ENCODE measurements at regions of chr19 and their contacts with region 1.

Region 1: DNA sequence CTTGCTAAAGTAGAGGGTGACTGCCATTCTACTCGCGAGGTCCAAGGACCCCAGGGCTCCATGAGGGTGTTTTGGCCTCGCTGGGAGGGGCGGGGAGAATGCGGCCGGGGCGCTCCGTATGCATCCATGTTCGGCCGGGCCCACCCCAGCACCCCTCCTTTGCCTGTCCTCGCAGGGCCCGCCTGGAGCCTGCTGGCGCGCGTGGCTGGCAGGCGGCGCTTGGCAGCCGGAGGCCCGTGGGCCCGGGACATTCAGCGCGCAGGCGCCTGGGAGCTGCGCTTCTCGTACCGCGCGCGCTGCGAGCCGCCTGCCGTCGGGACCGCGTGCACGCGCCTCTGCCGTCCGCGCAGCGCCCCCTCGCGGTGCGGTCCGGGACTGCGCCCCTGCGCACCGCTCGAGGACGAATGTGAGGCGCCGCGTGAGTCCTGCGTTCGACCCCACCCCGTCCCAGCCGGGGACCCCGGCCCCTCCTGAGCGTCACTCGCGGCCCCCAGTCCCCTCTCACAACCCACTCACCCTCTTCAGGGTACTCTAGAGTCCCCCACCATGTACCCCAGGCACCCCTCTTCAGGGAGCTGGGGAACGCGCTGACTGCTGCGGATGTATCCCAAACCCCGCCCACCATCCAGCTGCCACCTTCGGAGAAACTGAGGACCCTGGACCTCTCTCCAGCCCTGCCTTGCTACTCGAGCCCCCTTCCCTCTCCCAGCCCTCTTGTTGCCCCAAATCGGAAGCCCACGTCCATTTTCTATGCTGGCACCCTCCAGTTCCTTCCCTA is 4.1 kb downstream of the DLL3 start:
- DNase-seq: peak; percentile 93
- ATAC-seq: peak; percentile 24
- H3K4me3 ChIP-seq: peak overlapping the region in 1 of 2 experiments; percentile 34; a peak in 2 of 4 replicates
- H3K27ac ChIP-seq: peak overlapping the region; percentile 3; the same call in 1 of the 2 replicates
- H3K4me1 ChIP-seq: peaks cover 27% of the 10 kb centered on the region
- H3K27me3 ChIP-seq: peaks cover 8% of the 10 kb centered on the region
- CTCF ChIP-seq: no peak

Region 2: GRCh38 chr19:39057615-39058014 is 445.2 kb before region 1 on chr19:
- CTCF ChIA-PET with region 1: interaction called, 20 read pairs
- POLR2A ChIA-PET with region 1: no interaction called
- in situ Hi-C with region 1: no loop called
- intact Hi-C with region 1: no loop called
- DNase-seq: no peak
- ATAC-seq: no peak
- H3K4me3 ChIP-seq: no peak overlapping the region
- H3K27ac ChIP-seq: 0 out of 2 replicates have a peak overlapping the region, but pooled peaks have one; percentile 0
- H3K4me1 ChIP-seq: no peaks in the 10 kb centered on the region
- H3K27me3 ChIP-seq: no peaks in the 10 kb centered on the region
- CTCF ChIP-seq: no peak

Region 3: DNA sequence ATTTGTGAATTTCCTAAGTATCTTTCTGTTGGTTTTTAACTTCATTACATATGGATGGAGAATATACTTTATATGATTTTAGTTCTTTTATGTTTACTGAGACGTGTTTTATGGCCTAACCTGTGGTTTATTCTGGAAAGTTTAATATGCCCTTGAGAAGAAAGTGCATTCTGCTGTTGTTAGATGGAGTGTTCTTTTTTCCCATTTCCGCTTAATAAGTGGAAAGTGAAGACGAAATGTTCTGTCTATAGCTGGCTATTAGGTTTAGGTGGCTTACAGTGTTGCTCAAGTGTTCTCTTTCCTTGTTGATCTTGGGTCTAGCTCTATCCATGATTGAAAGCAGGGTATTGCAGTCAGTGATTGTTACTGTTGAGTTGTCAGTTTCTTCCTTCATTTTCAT is 39.4 kb before region 1 on chr19:
- CTCF ChIA-PET with region 1: interaction called, 15 read pairs
- POLR2A ChIA-PET with region 1: interaction called, 11 read pairs
- in situ Hi-C with region 1: no loop called
- intact Hi-C with region 1: no loop called
- DNase-seq: no peak
- ATAC-seq: no peak
- H3K4me3 ChIP-seq: no peak overlapping the region
- H3K27ac ChIP-seq: no peak overlapping the region
- H3K4me1 ChIP-seq: no peaks in the 10 kb centered on the region
- H3K27me3 ChIP-seq: no peaks in the 10 kb centered on the region
- CTCF ChIP-seq: no peak

Region 4: DNA sequence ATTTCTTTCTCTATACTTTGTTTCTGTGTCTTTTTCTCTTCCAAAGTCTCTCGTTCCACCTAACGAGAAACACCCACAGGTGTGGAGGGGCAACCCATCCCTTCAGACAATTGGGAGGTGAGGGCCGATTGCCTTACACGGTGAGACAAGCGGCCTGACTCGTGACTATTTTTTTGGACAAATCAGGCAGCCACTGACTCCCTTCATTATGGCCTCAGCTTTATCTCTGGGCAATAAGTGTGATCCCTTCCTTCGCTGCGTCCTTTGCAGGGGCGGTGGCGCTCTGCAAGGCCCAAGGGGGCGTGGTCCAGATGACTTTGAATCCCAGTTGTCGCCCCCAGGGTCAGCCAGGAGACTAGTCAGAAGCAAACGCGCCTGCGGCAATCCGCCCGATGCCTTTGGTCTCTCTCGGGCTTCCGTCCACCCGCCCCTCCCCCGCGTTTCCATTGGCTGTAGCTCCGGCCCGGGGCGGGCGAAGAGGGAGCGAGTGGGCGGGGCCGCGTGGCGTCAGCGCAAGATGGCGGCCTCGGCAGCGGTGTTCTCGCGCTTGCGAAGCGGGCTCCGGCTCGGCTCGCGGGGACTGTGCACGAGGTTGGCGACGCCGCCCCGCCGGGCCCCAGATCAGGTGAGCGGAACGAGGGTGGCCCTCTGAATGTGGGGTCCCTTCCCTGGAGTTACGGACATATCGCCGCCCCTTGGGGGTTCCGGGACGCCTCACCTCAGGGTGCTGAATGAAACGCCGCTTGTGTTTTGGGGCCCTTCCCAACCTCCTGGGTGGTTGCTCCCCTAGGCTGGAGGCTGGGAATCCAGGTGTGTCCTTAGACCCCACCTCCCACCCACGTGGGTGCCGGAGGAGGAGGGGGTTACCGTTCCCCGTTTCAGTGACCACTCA is 22.2 kb before region 1 on chr19 and contains the start of gene TIMM50:
- CTCF ChIA-PET with region 1: interaction called, 89 read pairs
- POLR2A ChIA-PET with region 1: interaction called, 20 read pairs
- in situ Hi-C with region 1: no loop called
- intact Hi-C with region 1: loop called (anchors 2 kb)
- DNase-seq: peak; percentile 100
- ATAC-seq: peak; percentile 96
- H3K4me3 ChIP-seq: peak within 1 kb of the TSS; percentile 39 to 55
- H3K27ac ChIP-seq: peak within 1 kb of the TSS; percentile 86
- H3K4me1 ChIP-seq: peaks cover 23% of the 10 kb centered on the region
- H3K27me3 ChIP-seq: no peaks in the 10 kb centered on the region
- CTCF ChIP-seq: no peak
- total RNA-seq, gene TIMM50: 1,837 TPM

Region 5: DNA sequence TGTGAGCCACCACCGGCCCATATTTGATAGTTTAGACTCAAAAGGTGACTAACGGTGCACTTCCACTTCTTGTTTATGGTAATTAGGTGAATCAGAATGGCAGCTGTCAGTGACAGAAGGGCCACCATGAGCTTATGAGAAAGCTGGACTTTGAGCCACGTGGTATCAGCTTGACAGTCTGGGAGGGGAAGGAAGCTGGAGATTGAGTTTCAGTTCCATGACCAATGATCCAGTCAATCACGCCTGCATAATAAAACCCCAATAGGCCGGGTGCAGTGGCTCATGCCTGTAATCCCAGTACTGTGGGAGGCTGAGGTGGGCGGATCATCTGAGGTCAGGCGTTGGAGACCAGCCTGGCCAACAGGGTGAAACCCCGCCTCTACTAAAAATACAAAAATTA is 21.7 kb after region 1 on chr19:
- CTCF ChIA-PET with region 1: interaction called, 41 read pairs
- POLR2A ChIA-PET with region 1: interaction called, 16 read pairs
- in situ Hi-C with region 1: no loop called
- intact Hi-C with region 1: no loop called
- DNase-seq: no peak
- ATAC-seq: peak; percentile 1; the same call in 1 of the 2 replicates
- H3K4me3 ChIP-seq: no peak overlapping the region
- H3K27ac ChIP-seq: no peak overlapping the region
- H3K4me1 ChIP-seq: peaks cover 3% of the 10 kb centered on the region; the same call in 1 of the 2 replicates
- H3K27me3 ChIP-seq: no peaks in the 10 kb centered on the region
- CTCF ChIP-seq: no peak

Region 6: DNA sequence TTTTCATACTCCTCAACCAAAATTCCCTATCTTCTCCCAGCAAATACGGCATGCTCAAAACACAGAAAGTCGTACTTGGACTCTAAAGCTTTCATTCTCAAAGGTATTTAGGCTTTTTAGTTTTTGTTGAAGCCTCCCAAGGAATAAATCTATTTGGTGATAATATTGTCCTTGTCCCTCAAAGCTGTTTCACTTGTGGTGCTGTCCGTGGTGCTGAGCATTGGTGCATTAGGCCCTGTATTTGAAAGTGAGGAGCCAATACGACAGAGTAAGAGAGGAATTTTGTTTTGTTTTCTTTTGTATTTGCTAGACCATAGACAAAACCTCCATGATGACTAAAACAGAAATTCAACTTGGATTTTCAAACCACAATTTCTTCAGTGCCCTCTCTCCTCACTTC is 96.3 kb after region 1 on chr19:
- CTCF ChIA-PET with region 1: no interaction called
- POLR2A ChIA-PET with region 1: no interaction called
- in situ Hi-C with region 1: loop called (anchors 5 kb)
- intact Hi-C with region 1: no loop called
- DNase-seq: no peak
- ATAC-seq: no peak
- H3K4me3 ChIP-seq: no peak overlapping the region
- H3K27ac ChIP-seq: no peak overlapping the region
- H3K4me1 ChIP-seq: no peaks in the 10 kb centered on the region
- H3K27me3 ChIP-seq: peaks cover 88% of the 10 kb centered on the region
- CTCF ChIP-seq: 0 out of 2 replicates have a peak, but pooled peaks have one; percentile 1

Region 7: DNA sequence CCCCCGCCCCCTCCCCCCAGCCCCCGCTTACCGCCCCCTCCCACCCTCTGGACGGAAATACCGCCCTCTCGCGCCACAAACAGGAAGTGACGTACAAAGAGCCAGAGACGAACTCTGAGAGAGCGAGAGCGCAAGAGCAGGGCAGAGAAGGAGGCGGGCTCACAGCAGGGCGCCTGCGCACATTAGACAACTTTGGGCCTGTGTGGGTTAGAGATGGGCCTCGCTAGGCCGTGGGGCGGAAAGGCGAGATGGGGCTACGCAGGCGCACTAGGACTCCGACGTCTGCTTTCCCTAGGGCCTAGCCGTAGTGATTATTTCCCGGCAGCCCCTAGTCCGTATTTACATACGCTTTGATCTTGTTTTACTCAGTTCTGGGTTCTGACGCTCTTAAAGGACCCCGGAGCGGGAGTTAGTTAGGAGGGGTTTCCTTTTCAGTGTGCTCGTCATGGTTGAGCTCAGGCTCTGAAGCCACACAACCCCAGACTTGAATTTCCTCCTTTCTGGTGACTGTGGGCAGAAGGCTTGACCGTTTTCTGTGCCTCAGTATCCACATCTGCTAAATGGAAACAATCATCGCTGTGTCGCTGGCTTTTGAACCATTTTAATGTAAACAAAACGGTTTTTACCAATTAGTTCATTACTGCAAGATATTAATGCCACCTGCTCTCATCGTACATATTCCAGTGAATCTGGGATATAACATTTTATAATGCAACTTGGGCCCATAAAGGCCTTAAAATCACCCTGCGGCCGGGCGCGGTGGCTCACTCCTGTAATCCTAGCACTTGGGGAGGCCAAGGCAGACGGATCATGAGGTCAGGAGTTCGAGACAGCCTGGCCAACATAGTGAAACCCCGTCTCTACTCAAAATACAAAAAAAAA is 782.8 kb after region 1 on chr19:
- CTCF ChIA-PET with region 1: no interaction called
- POLR2A ChIA-PET with region 1: interaction called, 20 read pairs
- in situ Hi-C with region 1: no loop called
- intact Hi-C with region 1: no loop called
- DNase-seq: peak; percentile 100
- ATAC-seq: peak; percentile 96
- H3K4me3 ChIP-seq: peak overlapping the region; percentile 36 to 47
- H3K27ac ChIP-seq: peak overlapping the region; percentile 89
- H3K4me1 ChIP-seq: peaks cover 51% of the 10 kb centered on the region
- H3K27me3 ChIP-seq: no peaks in the 10 kb centered on the region
- CTCF ChIP-seq: no peak